Vagina (tissue), 2 donors: ENCODE measurements at regions of chr1 and their contacts with region 1.

Region 1: GRCh38 chr1:160070243-160071163 is 543 bp upstream of the KCNJ10 start:
- DNase-seq: no peak
- H3K4me3 ChIP-seq: peak overlapping the region; percentile 47 to 55
- H3K27ac ChIP-seq: no peak overlapping the region
- H3K4me1 ChIP-seq: peaks cover 18% of the 10 kb centered on the region
- H3K27me3 ChIP-seq: no peaks in the 10 kb centered on the region
- CTCF ChIP-seq: no peak
- POLR2A ChIP-seq: no peak

Region 2: DNA sequence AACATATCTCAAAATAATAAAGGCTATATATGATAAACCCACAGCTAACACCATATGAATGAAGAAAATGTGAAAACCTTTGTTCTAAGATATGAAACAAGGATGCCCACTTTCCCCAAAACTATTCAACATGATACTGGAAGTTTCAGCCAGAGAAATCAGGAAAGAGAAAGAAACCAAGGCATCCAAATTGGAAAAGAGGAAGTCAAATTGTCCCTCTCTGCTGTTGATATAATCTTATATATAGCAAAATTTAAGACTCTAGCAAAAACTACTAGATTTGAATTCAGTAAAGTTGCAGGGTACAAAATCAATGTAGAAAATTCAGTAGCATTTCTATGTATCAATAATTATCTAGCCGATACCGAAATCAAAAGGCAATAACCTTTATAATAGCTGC is 1469.8 kb before region 1 on chr1:
- intact Hi-C with region 1: loop called (anchors 5 kb)
- DNase-seq: no peak
- H3K4me3 ChIP-seq: no peak overlapping the region
- H3K27ac ChIP-seq: no peak overlapping the region
- H3K4me1 ChIP-seq: no peaks in the 10 kb centered on the region
- H3K27me3 ChIP-seq: no peaks in the 10 kb centered on the region
- CTCF ChIP-seq: no peak
- POLR2A ChIP-seq: no peak